ENCODE measurements at regions of chr9 and their contacts with region 1.

Region 1: DNA sequence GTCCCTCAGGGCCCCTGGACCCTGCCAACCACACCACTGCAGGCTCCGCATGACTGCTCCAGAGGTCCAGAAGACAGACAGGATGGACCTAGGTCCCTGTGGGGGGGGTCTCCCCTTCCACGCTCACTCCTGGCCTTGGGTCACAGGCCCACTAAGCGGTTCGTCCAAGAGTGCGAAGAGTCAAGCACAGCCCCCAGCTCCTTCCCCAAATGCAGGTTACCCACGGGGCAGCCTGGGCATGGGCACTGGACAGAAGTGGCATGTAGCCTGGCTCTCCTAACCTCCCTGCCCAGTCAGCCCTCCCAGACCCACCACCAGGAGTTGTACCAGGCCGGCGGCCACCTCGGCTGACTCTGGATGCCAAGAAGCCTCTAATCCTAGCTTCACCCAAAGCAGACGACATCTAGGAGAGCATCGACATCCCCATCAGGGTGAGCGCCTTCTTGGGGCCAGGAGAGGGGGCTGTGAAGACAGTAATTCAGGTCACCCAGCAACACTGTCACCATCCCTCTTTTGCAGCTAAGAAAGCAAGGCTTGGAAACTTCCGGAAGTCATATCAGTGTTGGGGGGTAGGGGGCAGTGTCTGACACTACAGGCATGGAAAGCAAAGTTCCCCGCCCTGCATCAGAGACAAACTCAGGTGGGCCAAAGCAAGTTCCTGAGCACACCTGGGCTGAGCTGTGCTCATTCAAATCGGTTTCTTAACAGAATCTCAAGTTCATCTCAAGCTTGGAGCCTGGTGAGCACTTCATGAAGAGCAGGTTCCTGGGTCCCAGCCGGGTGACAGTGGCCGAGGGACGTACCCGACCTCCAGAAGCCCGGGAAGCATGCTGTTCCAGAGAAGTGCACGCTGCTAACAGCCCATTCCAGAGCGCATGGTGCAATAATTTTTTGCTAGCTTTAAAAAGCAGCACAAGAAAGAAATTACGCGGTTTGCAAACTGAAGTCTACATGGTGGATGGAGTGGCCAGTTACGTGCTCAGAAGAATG is 68.7 kb downstream of the SEMA4D start:
- DNase-seq: peak; percentile 61 to 75 (median 64)
- H3K4me3 ChIP-seq: no peak overlapping the region
- H3K27ac ChIP-seq: no peak overlapping the region
- H3K4me1 ChIP-seq: peaks cover 13 to 78% (median 71%) of the 10 kb centered on the region in 4 experiments
- H3K27me3 ChIP-seq: no peaks in the 10 kb centered on the region

Region 2: GRCh38 chr9:89405826-89406225 is 23.4 kb before region 1 on chr9:
- CTCF ChIA-PET with region 1: interaction called, 19 read pairs
- POLR2A ChIA-PET with region 1: interaction called, 3 read pairs
- DNase-seq: peak in 2 of 3 donors; percentile 68 to 69
- H3K4me3 ChIP-seq: peak overlapping the region in 3 of 7 experiments; percentile 15 to 35 (median 29)
- H3K27ac ChIP-seq: peak overlapping the region; percentile 10 to 60
- H3K4me1 ChIP-seq: peaks cover 29 to 81% (median 70%) of the 10 kb centered on the region in 4 experiments
- H3K27me3 ChIP-seq: no peaks in the 10 kb centered on the region

Region 3: DNA sequence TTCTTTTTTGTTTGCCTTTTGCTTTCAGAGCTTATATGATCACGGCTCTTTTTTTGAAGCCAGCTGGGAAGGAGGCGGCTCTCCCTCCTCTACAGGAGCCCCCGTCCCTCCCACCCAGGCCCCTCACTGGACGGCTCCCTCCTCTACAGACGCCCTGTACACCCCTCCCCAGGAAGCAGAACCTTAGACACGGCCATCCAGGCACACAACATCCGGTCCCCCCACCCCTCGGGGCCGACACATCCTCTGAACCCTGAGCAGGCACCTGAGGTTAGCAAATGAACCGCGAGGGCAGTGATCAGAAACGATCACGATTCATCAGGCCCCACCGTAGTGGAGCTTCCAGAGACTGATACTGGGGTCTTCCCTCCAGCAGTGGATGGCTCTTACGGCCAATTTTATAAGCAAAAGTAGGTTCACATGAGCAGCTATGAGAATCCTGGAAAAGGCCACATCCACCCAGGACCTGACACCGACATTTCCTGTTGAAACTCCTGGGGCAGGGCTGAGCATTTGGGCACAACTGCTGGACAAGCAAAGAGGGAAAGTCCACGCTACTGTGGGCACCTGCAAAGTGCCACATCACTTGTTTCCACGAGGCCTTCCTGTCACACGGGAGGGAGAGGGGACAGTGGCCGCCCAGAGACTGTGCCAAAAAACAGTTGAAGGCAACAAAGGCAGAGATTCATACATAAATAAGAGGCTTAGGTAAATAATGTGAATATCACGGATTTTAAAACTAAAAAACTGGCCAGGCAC is 10.1 kb before region 1 on chr9:
- CTCF ChIA-PET with region 1: interaction called, 17 read pairs
- POLR2A ChIA-PET with region 1: no interaction called
- DNase-seq: peak in 2 of 3 donors; percentile 70 to 82
- H3K4me3 ChIP-seq: peak overlapping the region in 3 of 7 experiments; percentile 0 to 21 (median 6)
- H3K27ac ChIP-seq: peak overlapping the region in 1 of 2 experiments; percentile 40
- H3K4me1 ChIP-seq: peaks cover 6 to 82% (median 68%) of the 10 kb centered on the region in 4 experiments
- H3K27me3 ChIP-seq: no peaks in the 10 kb centered on the region

Region 4: DNA sequence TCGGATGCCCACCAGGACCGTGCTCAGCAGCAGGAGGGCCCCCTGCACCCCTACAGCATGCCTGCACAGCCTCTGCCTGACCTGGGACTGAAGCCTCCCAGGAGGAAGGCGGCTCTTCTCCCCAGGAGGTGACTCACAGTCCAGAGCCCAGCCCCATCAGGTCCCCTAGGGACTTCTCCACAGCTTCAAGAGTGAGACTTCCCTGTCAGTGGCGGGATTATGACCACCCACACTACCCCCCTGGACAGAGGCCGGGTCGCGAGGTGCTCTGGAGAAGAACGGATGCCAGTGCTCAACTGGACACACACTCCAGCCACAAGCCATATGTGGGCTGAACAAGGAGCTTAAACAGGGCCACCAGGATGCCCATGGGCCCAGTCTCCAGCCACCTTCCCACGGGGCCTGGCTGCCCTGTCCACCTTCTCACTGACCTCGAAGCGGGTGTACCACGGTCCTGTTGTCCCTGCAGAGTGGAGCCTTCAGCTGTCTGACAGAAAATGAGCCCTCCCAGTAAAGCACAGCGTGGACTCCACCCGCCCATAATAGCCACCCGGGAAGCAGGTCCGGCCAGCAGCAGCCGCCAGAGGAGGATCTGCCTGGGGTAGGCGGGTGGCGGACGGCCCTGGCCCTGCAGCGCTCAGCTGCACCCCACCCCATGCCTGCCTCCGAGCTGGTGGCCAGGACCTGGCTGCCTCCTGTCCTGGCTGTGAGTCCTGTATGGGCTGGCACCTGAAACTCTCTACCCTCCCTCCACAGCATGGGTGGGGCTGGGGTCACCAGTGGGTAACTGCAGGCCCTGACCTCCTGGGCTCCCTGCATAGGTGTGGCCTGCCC is 14.0 kb after region 1 on chr9:
- CTCF ChIA-PET with region 1: interaction called, 28 read pairs
- POLR2A ChIA-PET with region 1: no interaction called
- DNase-seq: peak in 2 of 3 donors; percentile 59 to 65
- H3K4me3 ChIP-seq: no peak overlapping the region
- H3K27ac ChIP-seq: no peak overlapping the region
- H3K4me1 ChIP-seq: peaks cover 0 to 61% (median 49%) of the 10 kb centered on the region in 4 experiments
- H3K27me3 ChIP-seq: no peaks in the 10 kb centered on the region